MCF 10A (cell line): ENCODE measurements at regions of chr3 and their contacts with region 1.

Region 1: GRCh38 chr3:134473868-134474546 is 11.8 kb downstream of the ANAPC13 start:
- DNase-seq: peak; percentile 90
- H3K4me3 Mint-ChIP-seq: no peak overlapping the region
- H3K27ac Mint-ChIP-seq: no peak overlapping the region
- H3K4me1 Mint-ChIP-seq: peaks cover 31% of the 10 kb centered on the region
- H3K27me3 Mint-ChIP-seq: no peaks in the 10 kb centered on the region
- CTCF ChIP-seq: peak; percentile 60

Region 2: GRCh38 chr3:133812872-133813271 is 661.1 kb before region 1 on chr3:
- CTCF ChIA-PET with region 1: interaction called, 3 read pairs
- POLR2A ChIA-PET with region 1: no interaction called
- intact Hi-C with region 1: loop called (anchors 10 kb)
- DNase-seq: no peak
- H3K4me3 Mint-ChIP-seq: no peak overlapping the region
- H3K27ac Mint-ChIP-seq: no peak overlapping the region
- H3K4me1 Mint-ChIP-seq: peaks cover 18% of the 10 kb centered on the region
- H3K27me3 Mint-ChIP-seq: no peaks in the 10 kb centered on the region
- CTCF ChIP-seq: no peak

Region 3: DNA sequence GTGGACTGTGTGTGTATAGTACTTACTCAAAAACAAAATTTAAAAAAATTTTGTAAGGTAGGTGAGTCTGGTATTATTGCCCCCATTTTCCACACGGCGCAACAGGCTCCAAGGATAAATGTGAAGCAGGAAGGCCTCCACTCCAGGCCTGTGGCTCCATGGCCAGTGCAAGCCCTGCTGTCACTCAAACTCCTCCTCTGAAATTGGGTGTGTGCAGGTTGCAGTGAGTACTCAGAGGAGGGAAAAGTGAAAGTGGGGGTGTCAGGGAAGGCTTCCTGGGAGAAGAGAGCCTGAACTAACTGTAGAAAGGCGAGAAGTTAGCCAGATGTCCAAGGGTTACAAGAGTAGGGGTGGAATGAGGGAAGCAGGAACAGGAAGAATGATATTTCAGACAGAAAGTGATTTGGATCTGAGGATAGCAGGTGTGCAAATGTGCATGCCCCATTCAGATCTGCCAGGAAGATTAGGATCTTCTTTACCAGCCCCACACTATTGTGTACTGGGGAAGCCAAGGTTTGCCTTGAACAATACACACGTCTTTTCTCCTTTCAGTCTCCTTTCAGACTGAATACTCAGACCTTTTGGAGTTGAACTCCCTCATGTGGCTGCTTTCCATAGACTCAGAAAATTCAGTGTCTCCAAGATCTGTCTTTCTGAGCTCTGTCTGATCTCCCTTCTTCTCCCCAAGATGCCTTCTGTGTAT is 174.7 kb before region 1 on chr3:
- CTCF ChIA-PET with region 1: interaction called, 444 read pairs
- POLR2A ChIA-PET with region 1: no interaction called
- intact Hi-C with region 1: no loop called
- DNase-seq: peak; percentile 47
- H3K4me3 Mint-ChIP-seq: no peak overlapping the region
- H3K27ac Mint-ChIP-seq: peak overlapping the region; percentile 73
- H3K4me1 Mint-ChIP-seq: peaks cover 15% of the 10 kb centered on the region
- H3K27me3 Mint-ChIP-seq: no peaks in the 10 kb centered on the region
- CTCF ChIP-seq: peak; percentile 15

Region 4: DNA sequence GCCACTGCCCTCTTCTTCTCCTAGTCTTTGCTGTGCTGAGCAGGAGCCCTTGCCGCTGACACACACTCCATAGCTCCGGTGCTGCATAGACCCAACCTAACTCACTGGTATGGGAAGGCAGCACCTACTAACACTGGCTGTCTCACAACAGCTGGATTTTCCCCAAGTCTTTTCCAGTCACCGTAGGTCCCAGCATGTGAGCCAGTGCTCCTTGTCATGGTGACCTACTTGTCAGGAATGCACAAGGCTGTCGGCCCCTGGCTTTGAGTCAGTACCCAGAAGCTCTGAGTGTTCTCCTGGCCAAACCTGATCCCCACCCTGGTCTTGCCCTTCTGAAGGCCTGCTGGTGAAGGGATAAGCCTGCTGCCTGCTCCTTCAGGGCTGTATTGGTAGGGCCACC is 125.5 kb before region 1 on chr3:
- CTCF ChIA-PET with region 1: interaction called, 449 read pairs
- POLR2A ChIA-PET with region 1: interaction called, 13 read pairs
- intact Hi-C with region 1: no loop called
- DNase-seq: peak; percentile 56
- H3K4me3 Mint-ChIP-seq: no peak overlapping the region
- H3K27ac Mint-ChIP-seq: peak overlapping the region; percentile 77
- H3K4me1 Mint-ChIP-seq: peaks cover 39% of the 10 kb centered on the region
- H3K27me3 Mint-ChIP-seq: no peaks in the 10 kb centered on the region
- CTCF ChIP-seq: no peak

Region 5: GRCh38 chr3:134373994-134374790 is 99.8 kb before region 1 on chr3 and contains the start of gene AMOTL2:
- CTCF ChIA-PET with region 1: interaction called, 449 read pairs
- POLR2A ChIA-PET with region 1: interaction called, 64 read pairs
- intact Hi-C with region 1: loop called (anchors 1 kb)
- DNase-seq: peak; percentile 93
- H3K4me3 Mint-ChIP-seq: peak within 1 kb of the TSS; percentile 93
- H3K27ac Mint-ChIP-seq: peak within 1 kb of the TSS; percentile 88
- H3K4me1 Mint-ChIP-seq: peaks cover 48% of the 10 kb centered on the region
- H3K27me3 Mint-ChIP-seq: no peaks in the 10 kb centered on the region
- CTCF ChIP-seq: no peak
- total RNA-seq, gene AMOTL2: 92.6 and 137 TPM in 2 replicates

Region 6: DNA sequence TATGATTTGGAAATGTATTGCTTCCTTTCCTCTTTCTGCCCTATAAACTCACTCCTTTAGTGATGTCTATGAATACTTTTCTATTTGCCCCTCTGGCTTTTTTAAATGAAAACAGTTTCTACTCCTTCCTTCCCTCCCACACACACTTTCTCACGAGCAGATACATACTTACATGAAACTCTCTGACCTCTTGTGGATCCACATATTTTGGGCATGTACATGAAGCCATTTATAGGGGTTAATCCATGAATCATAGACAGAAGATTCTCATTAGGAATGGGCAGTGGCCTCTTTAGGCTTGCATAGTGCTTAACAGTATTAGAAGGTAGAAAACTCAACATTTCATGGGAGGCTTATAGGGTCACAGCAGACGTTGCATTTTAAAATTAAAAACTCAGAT is 13.0 kb before region 1 on chr3:
- CTCF ChIA-PET with region 1: interaction called, 16 read pairs
- POLR2A ChIA-PET with region 1: interaction called, 4 read pairs
- intact Hi-C with region 1: no loop called
- DNase-seq: no peak
- H3K4me3 Mint-ChIP-seq: no peak overlapping the region
- H3K27ac Mint-ChIP-seq: no peak overlapping the region
- H3K4me1 Mint-ChIP-seq: peaks cover 16% of the 10 kb centered on the region
- H3K27me3 Mint-ChIP-seq: no peaks in the 10 kb centered on the region
- CTCF ChIP-seq: no peak

Region 7: GRCh38 chr3:136343446-136344281 is 1869.7 kb after region 1 on chr3:
- CTCF ChIA-PET with region 1: no interaction called
- POLR2A ChIA-PET with region 1: no interaction called
- intact Hi-C with region 1: no loop called
- DNase-seq: peak; percentile 92
- H3K4me3 Mint-ChIP-seq: no peak overlapping the region
- H3K27ac Mint-ChIP-seq: no peak overlapping the region
- H3K4me1 Mint-ChIP-seq: peaks cover 6% of the 10 kb centered on the region
- H3K27me3 Mint-ChIP-seq: no peaks in the 10 kb centered on the region
- CTCF ChIP-seq: no peak